GM23248 (cell line): ENCODE measurements at regions of chr6 and their contacts with region 1.

Region 1: GRCh38 chr6:149032599-149033405 is 284.7 kb upstream of the TAB2 start:
- DNase-seq: peak; percentile 93
- H3K4me3 ChIP-seq: peak overlapping the region; percentile 48
- H3K27ac ChIP-seq: peak overlapping the region; percentile 96
- H3K4me1 ChIP-seq: peaks cover 43% of the 10 kb centered on the region
- H3K27me3 ChIP-seq: no peaks in the 10 kb centered on the region

Region 2: DNA sequence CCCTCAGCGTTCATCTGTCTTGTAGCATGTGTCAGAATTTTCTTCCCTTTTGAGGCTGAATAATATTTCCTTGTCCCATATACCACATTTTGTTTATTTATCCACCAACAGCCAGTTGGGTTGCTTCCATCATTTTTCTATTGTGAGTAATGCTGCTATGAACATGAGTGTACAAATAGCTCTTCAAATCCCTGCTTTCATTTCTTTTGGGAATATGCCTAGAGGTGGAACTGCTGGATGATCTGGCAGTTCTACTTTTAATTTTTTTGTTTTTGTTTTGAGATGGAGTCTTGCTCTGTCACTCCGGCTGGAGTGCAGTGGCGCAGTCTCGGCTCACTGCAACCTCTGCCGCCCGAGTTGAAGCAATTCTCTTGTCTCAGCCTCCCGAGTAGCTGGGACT is 625.4 kb before region 1 on chr6:
- in situ Hi-C with region 1: no loop called
- DNase-seq: peak; percentile 93
- H3K4me3 ChIP-seq: 0 out of 2 replicates have a peak overlapping the region, but pooled peaks have one; percentile 10
- H3K27ac ChIP-seq: peak overlapping the region; percentile 82
- H3K4me1 ChIP-seq: peaks cover 28% of the 10 kb centered on the region
- H3K27me3 ChIP-seq: no peaks in the 10 kb centered on the region

Region 3: DNA sequence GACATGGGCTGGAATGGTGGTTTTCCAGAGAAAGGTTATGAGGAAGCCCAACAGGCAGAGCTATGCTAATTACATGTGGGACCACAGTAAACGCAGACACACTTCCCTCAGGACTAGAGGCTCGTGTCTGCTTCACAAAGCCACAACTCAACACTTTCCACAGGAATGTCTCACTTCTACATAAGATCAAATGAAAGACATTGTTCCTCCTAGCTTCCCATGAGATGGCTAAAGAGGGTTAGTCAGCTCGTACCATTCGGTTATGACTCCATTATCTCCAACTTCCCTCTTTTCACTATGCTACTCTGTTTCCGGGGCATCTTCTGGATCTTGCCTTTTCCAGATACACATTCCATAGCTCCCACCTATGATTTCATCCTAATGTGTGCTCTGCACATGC is 481.1 kb after region 1 on chr6:
- in situ Hi-C with region 1: loop called (anchors 10 kb)
- DNase-seq: no peak
- H3K4me3 ChIP-seq: no peak overlapping the region
- H3K27ac ChIP-seq: no peak overlapping the region
- H3K4me1 ChIP-seq: peaks cover 4% of the 10 kb centered on the region; the same call in 1 of the 2 replicates
- H3K27me3 ChIP-seq: no peaks in the 10 kb centered on the region